ENCODE measurements at regions of chr14 and their contacts with region 1.

Region 1: DNA sequence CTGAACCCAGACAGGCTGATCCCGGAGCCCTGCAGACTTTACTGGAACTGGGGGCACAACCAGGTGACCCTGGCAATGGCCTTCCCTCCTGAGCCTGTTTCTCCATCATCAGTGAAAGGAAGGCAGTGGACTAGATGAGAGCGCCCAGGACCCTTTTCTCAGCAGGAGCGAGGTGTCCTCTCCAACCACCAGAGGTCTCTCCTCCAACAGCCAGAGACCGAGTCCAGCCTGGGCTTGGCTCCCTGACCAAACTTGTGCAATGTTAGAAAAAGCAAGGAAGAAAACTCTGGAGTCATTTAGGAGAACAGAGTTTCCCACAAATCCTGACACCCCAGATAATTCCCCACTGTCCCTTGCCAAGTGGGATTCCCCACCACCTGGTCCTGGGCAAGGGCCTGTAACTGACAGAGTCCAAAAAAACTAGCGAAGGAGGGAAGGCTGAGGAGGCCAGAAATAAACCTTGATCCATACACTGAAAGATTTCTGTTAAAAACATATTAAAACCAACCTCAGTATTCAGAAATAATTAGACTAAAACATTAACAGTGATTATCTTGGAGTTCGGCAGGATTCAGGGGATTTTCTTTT is 9.0 kb downstream of the RPS6KL1 start:
- DNase-seq: peak; percentile 66
- H3K4me3 ChIP-seq: no peak overlapping the region
- H3K27ac ChIP-seq: no peak overlapping the region
- H3K4me1 ChIP-seq: peaks cover 3% of the 10 kb centered on the region
- H3K27me3 ChIP-seq: no peaks in the 10 kb centered on the region
- CTCF ChIP-seq: peak; percentile 85 to 87
- POLR2A ChIP-seq: no peak

Region 2: GRCh38 chr14:74938531-74939495 is 24.7 kb after region 1 on chr14:
- CTCF ChIA-PET with region 1: interaction called, 5 read pairs
- POLR2A ChIA-PET with region 1: no interaction called
- dilution Hi-C with region 1: no loop called
- intact Hi-C with region 1: loop called (anchors 1 kb)
- DNase-seq: no peak
- H3K4me3 ChIP-seq: no peak overlapping the region
- H3K27ac ChIP-seq: no peak overlapping the region
- H3K4me1 ChIP-seq: peaks cover 38% of the 10 kb centered on the region
- H3K27me3 ChIP-seq: no peaks in the 10 kb centered on the region
- CTCF ChIP-seq: no peak
- POLR2A ChIP-seq: no peak

Region 3: DNA sequence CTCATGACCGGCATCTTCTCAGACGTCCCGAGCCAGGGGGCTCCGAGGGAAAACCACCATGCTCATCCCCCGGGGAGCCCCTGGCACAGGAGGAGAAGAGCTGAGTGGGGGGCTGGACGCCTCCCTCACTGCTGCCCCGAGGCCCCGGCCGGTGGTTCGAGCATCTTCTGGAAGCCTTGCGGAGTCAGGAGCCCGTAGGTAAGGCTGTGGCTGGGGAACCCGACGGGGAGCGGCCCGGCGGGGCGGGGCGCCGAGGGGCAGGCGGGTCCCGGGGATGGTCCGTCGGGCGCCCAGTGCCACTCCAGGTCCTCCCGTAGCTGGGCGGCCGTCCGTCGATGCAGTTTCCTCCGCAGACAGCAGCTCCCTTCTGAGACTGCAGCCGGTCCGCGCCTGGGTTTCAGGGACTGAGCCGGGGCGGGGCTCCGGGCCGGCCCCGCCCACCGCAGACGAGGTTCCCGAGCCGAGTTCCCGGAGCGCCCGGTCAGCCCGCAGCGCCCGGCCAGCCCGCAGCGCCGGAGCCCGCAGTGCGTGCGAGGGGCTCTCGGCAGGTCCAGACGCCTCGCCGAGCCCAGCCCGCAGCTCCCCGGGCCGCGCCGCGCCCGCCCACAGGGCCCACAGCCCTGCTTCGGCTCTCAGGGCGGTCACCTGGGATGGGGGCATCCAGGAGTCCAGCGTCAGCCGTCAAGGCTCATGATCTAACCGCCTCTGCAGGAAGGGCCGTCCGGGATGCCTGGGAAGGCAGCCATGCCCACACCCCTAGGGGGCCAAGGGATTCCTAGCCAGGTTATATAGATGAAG is 41.3 kb after region 1 on chr14 and contains the start of gene PGF:
- CTCF ChIA-PET with region 1: no interaction called
- POLR2A ChIA-PET with region 1: no interaction called
- dilution Hi-C with region 1: no loop called
- intact Hi-C with region 1: no loop called
- DNase-seq: peak; percentile 72
- H3K4me3 ChIP-seq: peak within 1 kb of the TSS; percentile 83 to 94 (median 84)
- H3K27ac ChIP-seq: peak within 1 kb of the TSS; percentile 71
- H3K4me1 ChIP-seq: peaks cover 42% of the 10 kb centered on the region
- H3K27me3 ChIP-seq: no peaks in the 10 kb centered on the region
- CTCF ChIP-seq: peak in 1 of 2 donors; percentile 1
- POLR2A ChIP-seq: peak; percentile 99
- total RNA-seq, gene PGF: 206 and 254 TPM in 2 replicates